HepG2 (cell line): ENCODE measurements at regions of chr1 and their contacts with region 1.

Region 1: DNA sequence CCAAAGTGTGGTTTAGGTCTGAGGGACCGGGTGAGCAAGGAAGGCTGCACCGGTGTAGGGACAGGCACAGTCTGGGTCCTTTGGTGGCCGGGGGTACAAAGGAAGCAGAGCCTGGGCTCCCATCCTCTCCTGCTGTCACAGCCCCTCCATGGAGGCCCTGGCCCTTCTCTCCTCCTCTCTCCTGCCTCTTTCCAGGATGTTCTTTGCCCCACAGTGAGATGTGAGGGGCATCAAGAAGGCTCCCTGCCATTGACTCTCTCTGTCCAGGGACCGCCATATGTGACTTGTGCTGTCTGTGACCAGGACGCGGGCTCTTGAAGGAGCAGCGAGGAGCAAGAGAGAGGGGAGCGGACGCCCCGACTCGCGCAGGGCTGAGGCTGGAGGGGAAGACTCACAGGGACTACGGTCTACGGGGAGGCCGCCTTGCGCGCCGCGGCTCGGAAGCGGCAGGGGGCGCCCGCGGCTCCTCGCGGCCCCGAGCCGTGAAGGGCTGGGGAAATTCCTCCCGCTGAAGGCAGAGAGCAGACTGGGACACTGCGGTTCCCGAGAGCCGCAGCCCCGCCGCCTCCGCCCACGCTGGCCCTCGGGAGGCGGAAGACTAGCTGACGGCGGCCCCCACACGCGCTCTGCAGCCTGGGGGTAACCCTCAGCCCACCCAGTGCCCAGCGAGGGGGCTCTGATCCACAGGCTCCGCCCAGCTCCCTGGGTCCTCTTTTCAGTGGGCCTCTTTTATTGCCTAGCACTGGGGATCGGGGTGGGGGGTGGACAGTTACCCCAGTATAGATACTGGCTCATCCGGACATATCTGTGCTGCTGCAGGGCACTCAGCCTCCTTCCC is 40.8 kb downstream of the MAB21L3 start:
- DNase-seq: no peak
- ATAC-seq: peak; percentile 72
- H3K4me3 ChIP-seq: peak overlapping the region; percentile 44 to 69 (median 54); a peak in 5 of 6 replicates
- H3K27ac ChIP-seq: peak overlapping the region; percentile 87
- H3K4me1 ChIP-seq: peaks cover 58% of the 10 kb centered on the region
- H3K27me3 ChIP-seq: peaks cover 0 to 2% of the 10 kb centered on the region in 2 experiments; a peak in 1 of 5 replicates
- CTCF ChIP-seq: peak; percentile 81
- EP300 ChIP-seq: no peak
- POLR2A ChIP-seq: 0 out of 4 replicates have a peak, but pooled peaks of 1 of the 2 experiments have one; percentile 20
- RAD21 ChIP-seq: peak; percentile 90

Region 2: GRCh38 chr1:116104667-116105205 is 47.2 kb before region 1 on chr1:
- CTCF ChIA-PET with region 1: no interaction called
- POLR2A ChIA-PET with region 1: no interaction called
- in situ Hi-C with region 1: no loop called
- intact Hi-C with region 1: no loop called
- DNase-seq: peak; percentile 53
- ATAC-seq: peak; percentile 77
- H3K4me3 ChIP-seq: no peak overlapping the region
- H3K27ac ChIP-seq: no peak overlapping the region
- H3K4me1 ChIP-seq: peaks cover 54% of the 10 kb centered on the region
- H3K27me3 ChIP-seq: no peaks in the 10 kb centered on the region
- CTCF ChIP-seq: no peak
- EP300 ChIP-seq: no peak
- POLR2A ChIP-seq: no peak
- RAD21 ChIP-seq: no peak

Region 3: DNA sequence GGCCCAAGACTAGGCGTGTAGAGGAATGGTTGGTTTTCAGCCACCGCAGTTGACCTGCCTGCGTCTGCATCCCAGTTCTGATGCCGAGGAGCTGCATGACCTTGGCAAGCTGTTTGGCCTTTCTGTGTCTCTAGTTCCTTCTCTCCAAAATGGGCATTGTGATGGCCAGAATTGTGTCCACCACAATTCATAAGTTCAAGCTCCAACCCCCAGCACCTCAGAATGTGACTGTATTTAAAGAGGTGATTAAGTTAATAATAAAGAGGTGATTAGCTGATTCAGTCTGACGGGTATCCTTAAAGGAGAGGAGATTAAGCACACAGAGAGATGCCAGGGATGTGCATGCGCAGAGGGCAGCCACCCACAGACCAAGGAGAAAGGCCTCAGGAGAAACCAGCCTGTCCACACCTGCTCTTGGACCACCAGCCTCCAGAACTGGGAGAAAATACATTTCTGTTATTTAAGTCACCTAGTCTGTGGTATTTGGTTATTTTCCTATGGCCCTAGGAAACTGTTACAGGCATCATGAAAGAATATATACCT is 12.3 kb before region 1 on chr1:
- CTCF ChIA-PET with region 1: no interaction called
- POLR2A ChIA-PET with region 1: interaction called, 10 read pairs
- in situ Hi-C with region 1: no loop called
- intact Hi-C with region 1: no loop called
- DNase-seq: no peak
- ATAC-seq: no peak
- H3K4me3 ChIP-seq: no peak overlapping the region
- H3K27ac ChIP-seq: no peak overlapping the region
- H3K4me1 ChIP-seq: peaks cover 13% of the 10 kb centered on the region
- H3K27me3 ChIP-seq: no peaks in the 10 kb centered on the region
- CTCF ChIP-seq: no peak
- EP300 ChIP-seq: no peak
- POLR2A ChIP-seq: no peak
- RAD21 ChIP-seq: no peak

Region 4: DNA sequence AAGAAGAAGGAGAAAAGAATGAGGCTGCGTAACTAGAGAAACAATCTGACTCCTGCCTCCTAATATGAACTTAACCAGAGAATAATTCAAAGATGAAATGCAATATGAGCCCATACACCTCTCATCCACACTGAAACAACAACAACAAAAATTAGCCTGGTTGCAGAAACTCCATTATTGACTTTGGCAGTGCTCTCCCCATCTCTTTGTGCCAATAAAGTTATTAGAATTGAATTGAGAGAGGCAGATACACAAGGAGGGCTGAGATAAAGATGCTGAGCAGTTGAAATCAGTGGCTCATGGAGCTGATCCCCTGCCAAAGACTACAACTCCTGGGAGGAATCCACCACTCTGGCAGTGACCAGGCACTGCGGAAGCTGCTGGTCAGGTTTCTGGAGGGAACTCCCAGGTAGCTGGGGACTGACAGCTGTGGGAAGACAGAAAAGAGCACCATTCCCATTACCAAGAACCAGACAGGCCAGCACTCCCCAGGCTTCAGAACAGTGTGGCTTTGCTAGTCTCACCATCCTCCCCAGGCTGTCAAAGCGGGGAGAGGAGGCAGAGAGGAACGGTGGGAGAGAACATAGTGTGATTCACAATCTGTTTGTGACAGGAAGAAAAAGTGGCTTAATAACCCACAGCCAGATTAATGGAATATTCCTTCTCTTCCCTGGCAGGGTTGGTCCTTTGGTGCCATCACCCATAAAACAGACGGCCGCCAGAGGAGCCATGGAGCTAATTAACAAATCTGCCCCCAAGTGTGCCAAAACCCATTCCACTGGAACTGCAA is 51.2 kb after region 1 on chr1:
- CTCF ChIA-PET with region 1: no interaction called
- POLR2A ChIA-PET with region 1: no interaction called
- in situ Hi-C with region 1: loop called (anchors 10 kb)
- intact Hi-C with region 1: no loop called
- DNase-seq: no peak
- ATAC-seq: no peak
- H3K4me3 ChIP-seq: no peak overlapping the region
- H3K27ac ChIP-seq: no peak overlapping the region
- H3K4me1 ChIP-seq: peaks cover 8% of the 10 kb centered on the region
- H3K27me3 ChIP-seq: peaks cover 0 to 33% of the 10 kb centered on the region in 2 experiments; a peak in 4 of 5 replicates
- CTCF ChIP-seq: no peak
- EP300 ChIP-seq: no peak
- POLR2A ChIP-seq: no peak
- RAD21 ChIP-seq: no peak

Region 5: DNA sequence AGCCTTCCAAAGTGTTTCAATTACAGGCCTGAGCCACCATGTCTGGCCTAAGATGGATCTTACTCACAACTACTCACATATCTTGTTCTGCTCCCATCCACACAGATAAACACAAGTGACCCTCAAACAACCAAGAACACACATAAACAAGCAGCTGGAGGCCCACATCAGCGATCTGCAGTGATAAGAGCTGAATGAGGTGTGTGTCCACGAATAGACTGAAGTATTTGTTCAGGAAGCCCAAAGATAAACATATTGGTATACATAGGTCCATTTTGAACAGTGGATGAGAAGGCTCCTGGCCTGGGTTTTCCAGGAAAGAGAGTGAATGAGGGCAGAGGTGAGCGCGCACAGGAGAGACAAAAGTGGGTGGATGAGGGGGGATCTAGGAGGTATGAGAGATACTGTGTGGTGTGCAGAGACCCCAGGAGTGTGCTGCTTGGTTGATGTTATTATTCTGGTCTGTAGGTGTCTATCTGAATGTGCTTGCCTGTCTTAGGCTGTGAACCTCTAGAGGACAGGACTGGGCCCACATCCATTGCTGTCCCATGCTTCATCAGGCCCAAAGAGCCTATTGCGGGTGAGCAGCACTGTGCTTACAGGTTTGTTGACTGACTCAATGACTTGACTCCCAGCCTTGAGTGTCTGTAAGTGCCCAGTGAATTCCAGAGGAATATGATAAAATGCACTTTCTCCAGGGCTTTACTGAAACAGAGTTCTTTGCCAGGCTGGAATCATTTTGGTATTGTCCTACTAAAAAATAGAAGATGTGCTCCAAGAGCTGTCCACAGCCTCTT is 141.2 kb after region 1 on chr1:
- CTCF ChIA-PET with region 1: no interaction called
- POLR2A ChIA-PET with region 1: no interaction called
- in situ Hi-C with region 1: no loop called
- intact Hi-C with region 1: loop called (anchors 1 kb)
- DNase-seq: peak; percentile 91
- ATAC-seq: peak; percentile 96
- H3K4me3 ChIP-seq: no peak overlapping the region
- H3K27ac ChIP-seq: no peak overlapping the region
- H3K4me1 ChIP-seq: peaks cover 61% of the 10 kb centered on the region
- H3K27me3 ChIP-seq: peaks cover 0 to 39% of the 10 kb centered on the region in 2 experiments; a peak in 4 of 5 replicates
- CTCF ChIP-seq: no peak
- EP300 ChIP-seq: peak in 1 of 2 experiments; percentile 85; a peak in 2 of 4 replicates
- POLR2A ChIP-seq: no peak
- RAD21 ChIP-seq: no peak

Region 6: GRCh38 chr1:116498789-116499628 is 347.1 kb after region 1 on chr1:
- CTCF ChIA-PET with region 1: interaction called, 4 read pairs
- POLR2A ChIA-PET with region 1: interaction called, 3 read pairs
- in situ Hi-C with region 1: loop called (anchors 5 kb)
- intact Hi-C with region 1: no loop called
- DNase-seq: peak; percentile 68
- ATAC-seq: peak; percentile 66
- H3K4me3 ChIP-seq: no peak overlapping the region
- H3K27ac ChIP-seq: peak overlapping the region; percentile 16
- H3K4me1 ChIP-seq: peaks cover 61% of the 10 kb centered on the region
- H3K27me3 ChIP-seq: no peaks in the 10 kb centered on the region
- CTCF ChIP-seq: peak; percentile 88
- EP300 ChIP-seq: no peak
- POLR2A ChIP-seq: no peak
- RAD21 ChIP-seq: peak; percentile 94

Region 7: GRCh38 chr1:116679091-116679827 is 527.3 kb after region 1 on chr1:
- CTCF ChIA-PET with region 1: no interaction called
- POLR2A ChIA-PET with region 1: no interaction called
- in situ Hi-C with region 1: no loop called
- intact Hi-C with region 1: no loop called
- DNase-seq: no peak
- ATAC-seq: no peak
- H3K4me3 ChIP-seq: no peak overlapping the region
- H3K27ac ChIP-seq: no peak overlapping the region
- H3K4me1 ChIP-seq: no peaks in the 10 kb centered on the region
- H3K27me3 ChIP-seq: no peaks in the 10 kb centered on the region; a peak in 1 of 5 replicates
- CTCF ChIP-seq: 0 out of 2 replicates have a peak, but pooled peaks have one; percentile 10
- EP300 ChIP-seq: no peak
- POLR2A ChIP-seq: no peak
- RAD21 ChIP-seq: no peak